ENCODE measurements at regions of chr20 and their contacts with region 1.

Region 1: GRCh38 chr20:41028348-41029148 is at the start of gene TOP1:
- DNase-seq: peak; percentile 99
- ATAC-seq: peak; percentile 96
- H3K4me3 Mint-ChIP-seq: peak within 1 kb of the TSS; percentile 82
- H3K27ac Mint-ChIP-seq: peak within 1 kb of the TSS; percentile 87
- H3K4me1 Mint-ChIP-seq: peaks cover 41% of the 10 kb centered on the region
- H3K27me3 Mint-ChIP-seq: no peaks in the 10 kb centered on the region
- total RNA-seq, gene TOP1: 72.6 to 75.2 TPM

Region 2: DNA sequence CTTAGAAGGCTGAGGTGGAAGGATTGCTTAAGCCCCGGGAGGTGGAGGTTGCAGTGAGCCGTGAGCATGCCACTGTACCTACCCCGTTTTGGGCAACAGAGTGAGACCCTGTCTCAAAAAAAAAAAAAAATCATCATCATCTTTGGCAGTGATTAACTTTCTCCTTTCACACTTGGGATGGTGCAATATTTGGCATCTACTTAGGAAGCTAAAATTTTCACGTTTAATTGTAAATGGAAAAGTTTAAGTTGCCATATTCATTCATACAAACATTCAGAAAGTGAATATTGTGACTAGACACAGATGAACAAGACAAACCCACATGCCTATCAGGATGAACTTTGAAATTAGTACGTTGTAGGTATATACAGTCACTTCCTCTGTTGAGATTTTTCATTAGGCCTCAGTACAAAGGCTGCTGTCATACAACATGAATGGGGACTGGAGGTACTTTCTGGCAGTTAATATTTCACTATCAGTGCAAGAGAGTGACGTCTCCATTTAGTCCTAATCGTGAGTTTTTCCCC is 10.4 kb after region 1 on chr20:
- POLR2A ChIA-PET with region 1: interaction called, 22 read pairs
- DNase-seq: no peak
- ATAC-seq: peak; percentile 51
- H3K4me3 Mint-ChIP-seq: peak overlapping the region; percentile 29
- H3K27ac Mint-ChIP-seq: peak overlapping the region; percentile 60
- H3K4me1 Mint-ChIP-seq: peaks cover 69% of the 10 kb centered on the region
- H3K27me3 Mint-ChIP-seq: no peaks in the 10 kb centered on the region

Region 3: GRCh38 chr20:41047975-41048305 is 19.4 kb after region 1 on chr20:
- POLR2A ChIA-PET with region 1: interaction called, 11 read pairs
- DNase-seq: no peak
- ATAC-seq: peak; percentile 32
- H3K4me3 Mint-ChIP-seq: peak overlapping the region; percentile 87
- H3K27ac Mint-ChIP-seq: peak overlapping the region; percentile 96
- H3K4me1 Mint-ChIP-seq: peaks cover 75% of the 10 kb centered on the region
- H3K27me3 Mint-ChIP-seq: no peaks in the 10 kb centered on the region

Region 4: DNA sequence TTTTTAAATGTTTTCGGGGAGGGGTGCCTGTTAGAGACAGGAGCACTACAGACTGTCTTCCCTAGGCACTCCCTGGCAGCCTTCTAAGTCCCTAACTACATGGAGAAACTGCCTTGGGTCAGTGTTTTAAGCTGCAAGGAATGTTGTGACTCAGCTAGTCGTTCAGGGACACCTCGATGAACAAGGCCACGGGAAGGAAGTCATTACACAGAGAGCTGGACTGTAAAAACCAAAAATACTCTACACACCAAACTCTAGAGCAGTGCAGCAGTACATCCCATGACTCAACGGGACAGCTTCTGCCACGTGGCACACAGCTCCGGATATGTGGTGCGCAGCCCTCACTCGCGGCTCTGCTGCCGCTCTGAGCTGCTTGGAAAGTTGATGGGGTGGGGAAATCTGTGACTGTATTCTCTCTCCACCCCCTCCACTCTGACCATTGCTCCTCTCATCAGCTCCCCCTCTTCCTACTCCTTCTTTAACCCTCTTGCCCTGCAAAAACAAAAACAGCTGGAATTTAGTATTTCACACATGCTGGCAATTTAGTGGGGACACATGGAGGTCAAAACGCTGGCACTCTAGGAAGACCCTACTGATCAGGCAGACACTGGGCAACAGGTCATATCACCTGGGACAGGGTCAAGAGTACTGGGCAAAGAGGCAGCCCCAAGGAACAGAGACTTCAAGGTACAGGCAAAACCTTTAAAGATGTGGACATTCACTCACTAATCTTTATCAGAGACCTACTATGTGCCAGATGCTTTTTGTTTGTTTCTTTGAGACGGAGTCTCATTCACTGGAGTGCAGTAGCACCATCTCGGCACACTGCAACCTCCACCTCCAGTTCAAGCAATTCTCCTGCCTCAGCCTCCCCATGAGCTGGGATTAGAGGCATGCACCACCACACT is 301.1 kb after region 1 on chr20:
- POLR2A ChIA-PET with region 1: no interaction called
- DNase-seq: peak; percentile 62
- ATAC-seq: peak; percentile 100
- H3K4me3 Mint-ChIP-seq: peak overlapping the region; percentile 62
- H3K27ac Mint-ChIP-seq: peak overlapping the region; percentile 86
- H3K4me1 Mint-ChIP-seq: peaks cover 18% of the 10 kb centered on the region
- H3K27me3 Mint-ChIP-seq: peaks cover 3% of the 10 kb centered on the region